OCI-LY7 (cell line): ENCODE measurements at regions of chr16 and their contacts with region 1.

Region 1: GRCh38 chr16:12240036-12240435 is 263.5 kb downstream of the SNX29 start:
- DNase-seq: no peak
- H3K4me3 ChIP-seq: peak overlapping the region; percentile 3
- H3K27ac ChIP-seq: peak overlapping the region; percentile 57
- H3K4me1 ChIP-seq: peaks cover 88% of the 10 kb centered on the region
- CTCF ChIP-seq: no peak

Region 2: DNA sequence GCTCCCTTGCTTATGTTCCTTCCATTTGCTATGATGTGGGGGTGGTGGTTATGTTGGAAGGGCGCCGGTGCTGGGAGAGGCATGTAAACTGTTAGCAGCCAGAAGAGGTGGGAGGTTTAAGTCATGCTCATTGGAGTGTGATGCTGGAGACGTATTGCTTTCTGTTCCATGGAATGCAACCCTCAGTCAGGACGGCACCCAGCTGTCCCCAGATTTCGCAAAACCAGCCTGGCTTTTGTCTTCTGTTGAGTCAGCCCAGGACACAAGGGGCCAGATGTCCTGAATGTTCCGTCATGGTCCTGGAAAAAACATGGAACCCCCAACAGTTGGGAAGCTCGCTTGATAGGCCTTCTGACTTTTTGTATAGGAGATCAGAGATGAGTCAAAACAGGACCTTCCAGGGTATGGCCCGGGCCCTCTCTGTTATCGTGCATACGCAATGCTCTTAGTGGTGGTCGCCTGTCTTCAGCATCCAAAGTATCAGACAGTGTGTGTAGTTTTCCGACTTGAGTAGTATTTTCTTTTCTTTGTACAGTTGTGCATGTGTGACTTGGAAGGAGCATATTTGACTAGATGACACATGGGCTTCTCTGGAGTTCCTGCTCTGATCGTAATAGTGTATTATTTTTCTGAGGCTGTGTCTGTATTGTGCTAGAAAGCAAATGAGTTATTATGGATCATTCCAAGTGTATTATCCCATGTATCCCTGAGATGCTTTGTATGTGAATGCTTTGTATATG is 61.6 kb before region 1 on chr16:
- CTCF ChIA-PET with region 1: no interaction called
- POLR2A ChIA-PET with region 1: no interaction called
- intact Hi-C with region 1: no loop called
- DNase-seq: no peak
- H3K4me3 ChIP-seq: no peak overlapping the region
- H3K27ac ChIP-seq: no peak overlapping the region
- H3K4me1 ChIP-seq: peaks cover 5% of the 10 kb centered on the region
- CTCF ChIP-seq: no peak

Region 3: DNA sequence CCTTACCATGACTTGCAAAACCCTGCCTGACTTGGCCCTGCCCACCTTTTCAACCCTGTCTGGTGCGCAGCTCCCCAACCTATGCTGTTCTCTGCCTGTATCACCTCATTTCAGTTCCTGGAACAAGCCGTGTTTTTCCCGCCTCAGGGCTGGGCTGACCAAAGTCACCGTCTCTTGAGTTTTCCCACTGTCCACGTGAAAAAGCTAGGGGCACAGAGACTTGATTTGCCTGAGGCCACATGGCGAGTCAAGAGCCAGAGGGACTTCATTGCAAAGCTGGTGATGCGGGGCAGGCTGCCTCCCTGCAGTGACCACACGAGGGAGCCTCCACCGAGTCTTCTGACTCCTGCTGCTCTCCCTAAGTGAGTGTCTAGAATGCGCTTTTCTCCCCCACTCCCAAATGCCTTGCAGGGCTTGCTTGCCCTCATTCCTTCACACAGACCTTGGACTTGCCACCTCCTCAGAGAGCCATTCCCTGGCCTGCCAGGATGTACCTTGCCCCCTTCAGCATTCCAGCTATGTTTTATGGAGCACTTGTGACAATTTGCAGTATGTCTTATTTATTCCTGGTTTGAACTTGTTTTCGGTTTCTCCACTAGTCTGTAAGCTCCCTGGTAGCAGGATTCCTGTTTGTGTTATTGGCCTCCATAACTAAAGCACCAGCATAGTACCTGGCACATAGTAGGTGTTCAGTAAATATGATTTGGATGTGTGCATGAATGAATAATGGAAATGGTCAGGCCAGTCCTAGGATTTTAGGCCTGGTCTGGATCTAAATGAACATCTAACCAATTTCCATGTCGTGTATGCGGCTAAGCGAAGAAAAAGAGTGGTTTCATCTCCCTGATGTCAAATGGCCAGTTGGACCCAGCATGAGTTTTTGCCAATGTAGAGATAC is 11.2 kb before region 1 on chr16:
- CTCF ChIA-PET with region 1: interaction called, 4 read pairs
- POLR2A ChIA-PET with region 1: interaction called, 19 read pairs
- intact Hi-C with region 1: no loop called
- DNase-seq: peak; percentile 89
- H3K4me3 ChIP-seq: no peak overlapping the region
- H3K27ac ChIP-seq: peak overlapping the region; percentile 66
- H3K4me1 ChIP-seq: peaks cover 71% of the 10 kb centered on the region
- CTCF ChIP-seq: peak; percentile 96

Region 4: GRCh38 chr16:12252616-12253015 is 12.6 kb after region 1 on chr16:
- CTCF ChIA-PET with region 1: interaction called, 5 read pairs
- POLR2A ChIA-PET with region 1: interaction called, 26 read pairs
- intact Hi-C with region 1: no loop called
- DNase-seq: peak; percentile 60
- H3K4me3 ChIP-seq: no peak overlapping the region
- H3K27ac ChIP-seq: peak overlapping the region; percentile 97
- H3K4me1 ChIP-seq: peaks cover 98% of the 10 kb centered on the region
- CTCF ChIP-seq: no peak